ENCODE measurements at regions of chr11 and their contacts with region 1.

Region 1: DNA sequence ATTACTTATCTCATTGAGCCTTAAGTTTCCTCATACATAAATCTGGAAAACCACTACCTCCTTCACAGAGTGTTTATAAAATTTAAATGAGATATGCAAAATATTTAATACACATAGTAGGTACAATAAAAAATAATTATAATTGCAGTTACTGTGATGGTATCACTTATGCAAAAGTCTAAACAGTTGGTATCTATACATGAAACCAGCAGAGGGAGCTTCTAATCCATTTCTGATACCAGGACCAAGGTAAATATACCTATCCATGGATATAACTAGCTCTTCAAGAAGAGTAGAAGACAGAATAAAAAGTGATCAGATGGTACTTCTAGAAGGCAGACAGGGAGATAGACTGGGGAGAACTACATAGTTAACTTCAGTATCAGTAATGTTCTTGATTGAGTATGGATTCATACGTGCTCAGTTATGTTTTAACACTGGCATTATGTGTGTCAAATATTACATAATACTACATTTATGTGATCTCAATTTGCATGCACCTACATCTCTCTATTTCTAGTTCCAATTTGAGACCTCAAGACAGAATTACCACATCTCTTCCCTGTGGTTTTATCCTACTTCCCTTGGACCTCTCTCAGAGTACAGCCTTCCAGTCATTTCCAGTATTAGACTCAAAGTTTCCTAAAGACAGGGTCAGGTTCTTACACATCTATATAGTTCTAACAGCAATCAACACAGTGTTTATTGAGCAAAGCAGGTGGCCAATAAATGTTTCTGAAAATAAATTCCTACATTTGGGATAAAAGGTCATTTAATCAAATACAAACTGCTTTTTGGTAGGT is 13.7 kb upstream of the TSG101 start:
- DNase-seq: no peak
- ATAC-seq: peak; percentile 76
- H3K4me3 Mint-ChIP-seq: no peak overlapping the region
- H3K27ac Mint-ChIP-seq: no peak overlapping the region
- H3K4me1 Mint-ChIP-seq: peaks cover 6% of the 10 kb centered on the region
- H3K27me3 Mint-ChIP-seq: no peaks in the 10 kb centered on the region

Region 2: GRCh38 chr11:18294862-18295261 is 245.5 kb before region 1 on chr11:
- CTCF ChIA-PET with region 1: no interaction called
- POLR2A ChIA-PET with region 1: no interaction called
- intact Hi-C with region 1: no loop called
- DNase-seq: peak; percentile 19
- ATAC-seq: peak; percentile 94
- H3K4me3 Mint-ChIP-seq: no peak overlapping the region
- H3K27ac Mint-ChIP-seq: no peak overlapping the region
- H3K4me1 Mint-ChIP-seq: peaks cover 13% of the 10 kb centered on the region
- H3K27me3 Mint-ChIP-seq: no peaks in the 10 kb centered on the region

Region 3: DNA sequence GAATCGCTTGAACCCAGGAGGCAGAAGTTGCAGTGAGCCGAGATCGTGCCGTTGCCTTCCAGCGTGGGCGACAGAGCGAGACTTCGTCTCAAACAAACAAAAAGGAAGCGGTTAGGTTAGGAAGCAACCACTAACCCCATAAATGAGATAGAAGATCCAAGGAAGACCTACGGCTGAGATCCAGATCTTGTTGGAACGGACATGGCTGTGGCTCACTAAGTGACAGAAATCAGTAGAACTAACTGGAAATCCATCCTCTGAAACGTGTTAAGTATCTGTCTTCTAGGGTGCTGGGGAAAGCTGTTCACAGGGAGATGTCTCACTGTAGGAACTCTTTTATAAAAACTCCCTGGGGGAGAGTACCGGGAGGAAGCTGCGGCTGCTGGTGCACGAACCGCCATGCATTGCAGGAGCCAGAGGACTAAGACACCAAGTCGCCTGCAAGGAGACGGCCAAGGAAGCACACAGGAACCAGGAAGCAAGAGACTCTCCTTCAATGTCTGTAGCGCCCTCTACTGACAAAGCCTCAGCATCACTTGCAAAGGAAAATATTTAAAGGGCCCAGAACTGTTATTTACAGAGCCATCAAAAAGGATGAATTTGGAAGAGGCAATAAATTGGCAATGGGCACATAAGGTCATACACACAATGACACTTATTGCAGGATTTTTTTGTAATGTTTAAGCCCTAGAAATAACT is 110.6 kb after region 1 on chr11:
- CTCF ChIA-PET with region 1: interaction called, 20 read pairs
- POLR2A ChIA-PET with region 1: no interaction called
- intact Hi-C with region 1: loop called (anchors 1 kb)
- DNase-seq: peak; percentile 66
- ATAC-seq: peak; percentile 74
- H3K4me3 Mint-ChIP-seq: no peak overlapping the region
- H3K27ac Mint-ChIP-seq: no peak overlapping the region
- H3K4me1 Mint-ChIP-seq: no peaks in the 10 kb centered on the region
- H3K27me3 Mint-ChIP-seq: no peaks in the 10 kb centered on the region

Region 4: GRCh38 chr11:18671246-18671645 is 130.8 kb after region 1 on chr11:
- CTCF ChIA-PET with region 1: no interaction called
- POLR2A ChIA-PET with region 1: no interaction called
- intact Hi-C with region 1: no loop called
- DNase-seq: peak; percentile 44
- ATAC-seq: peak; percentile 28
- H3K4me3 Mint-ChIP-seq: no peak overlapping the region
- H3K27ac Mint-ChIP-seq: peak overlapping the region; percentile 70
- H3K4me1 Mint-ChIP-seq: peaks cover 36% of the 10 kb centered on the region
- H3K27me3 Mint-ChIP-seq: no peaks in the 10 kb centered on the region

Region 5: DNA sequence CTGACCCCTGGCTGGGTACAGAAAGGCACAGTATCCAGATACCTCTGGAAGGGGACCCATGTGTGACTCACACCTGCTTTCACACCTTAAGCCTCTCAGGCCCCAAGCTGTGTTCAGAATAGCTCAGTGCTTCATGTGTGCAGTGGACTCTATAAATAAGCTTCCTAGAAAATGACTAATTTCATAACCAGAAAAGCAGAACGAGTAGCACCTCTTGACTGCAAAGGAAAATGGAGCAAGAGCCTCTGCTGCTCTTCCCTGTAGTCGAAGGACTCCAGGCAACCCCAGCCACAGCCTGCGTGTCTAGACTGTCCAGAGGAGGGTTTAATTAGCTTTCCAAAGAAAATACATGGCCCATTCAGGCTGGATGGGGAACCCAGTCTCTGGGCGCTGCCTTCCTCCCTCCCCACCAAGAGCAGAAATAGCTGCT is 228.1 kb after region 1 on chr11:
- CTCF ChIA-PET with region 1: interaction called, 10 read pairs
- POLR2A ChIA-PET with region 1: no interaction called
- intact Hi-C with region 1: loop called (anchors 1 kb)
- DNase-seq: no peak
- ATAC-seq: peak; percentile 63
- H3K4me3 Mint-ChIP-seq: no peak overlapping the region
- H3K27ac Mint-ChIP-seq: no peak overlapping the region
- H3K4me1 Mint-ChIP-seq: peaks cover 11% of the 10 kb centered on the region
- H3K27me3 Mint-ChIP-seq: peaks cover 19% of the 10 kb centered on the region

Measured in activated CD4-positive, alpha-beta T cell treated with anti-CD3 and anti-CD28 coated beads for 36 hours (primary cell).